ENCODE measurements at regions of chr9 and their contacts with region 1.

Region 1: DNA sequence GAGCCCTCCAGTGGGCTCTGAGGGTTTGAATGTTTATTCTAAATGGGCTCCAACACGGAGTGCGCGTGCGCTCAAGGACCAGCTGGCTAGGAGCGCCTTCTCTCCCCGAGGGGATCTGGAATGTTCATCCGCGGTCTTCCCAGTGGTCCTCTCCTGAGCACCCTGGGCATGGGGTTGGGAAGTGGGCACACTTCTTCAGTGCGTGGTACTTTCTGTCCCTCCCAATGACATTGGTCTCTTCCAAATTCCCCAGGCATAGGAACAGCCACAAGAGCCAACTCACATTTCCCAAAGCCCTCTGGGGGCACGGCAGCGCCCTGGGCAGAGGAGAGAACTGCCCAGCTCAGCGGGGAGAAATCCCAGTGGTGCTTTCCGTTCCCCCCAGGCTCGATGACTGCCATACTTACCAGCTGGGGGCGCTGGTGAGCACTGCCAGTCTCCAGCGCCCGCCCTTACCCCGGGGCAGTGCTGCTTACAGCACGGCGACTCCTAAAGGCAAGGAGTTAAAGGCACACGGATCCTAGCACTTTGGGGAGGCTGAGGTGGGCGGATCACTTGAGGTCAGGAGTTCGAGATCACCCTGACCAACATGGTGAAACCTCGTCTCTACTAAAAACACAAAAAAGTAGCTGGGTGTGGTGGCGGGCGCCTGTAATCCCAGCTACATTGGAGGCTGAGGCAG is 29.9 kb upstream of the OBP2B start:
- DNase-seq: peak; percentile 53 to 62 (median 56)
- H3K4me3 ChIP-seq: no peak overlapping the region
- H3K4me3 Mint-ChIP-seq: peak overlapping the region in 6 of 8 donors; percentile 17 to 65 (median 46)
- H3K27ac ChIP-seq: peak overlapping the region; percentile 2
- H3K27ac Mint-ChIP-seq: no peak overlapping the region
- H3K4me1 ChIP-seq: peaks cover 13% of the 10 kb centered on the region
- H3K4me1 Mint-ChIP-seq: peaks cover 0 to 17% (median 11%) of the 10 kb centered on the region in 4 donors
- H3K27me3 ChIP-seq: no peaks in the 10 kb centered on the region
- H3K27me3 Mint-ChIP-seq: peaks cover 11 to 12% of the 10 kb centered on the region in 2 donors

Region 2: DNA sequence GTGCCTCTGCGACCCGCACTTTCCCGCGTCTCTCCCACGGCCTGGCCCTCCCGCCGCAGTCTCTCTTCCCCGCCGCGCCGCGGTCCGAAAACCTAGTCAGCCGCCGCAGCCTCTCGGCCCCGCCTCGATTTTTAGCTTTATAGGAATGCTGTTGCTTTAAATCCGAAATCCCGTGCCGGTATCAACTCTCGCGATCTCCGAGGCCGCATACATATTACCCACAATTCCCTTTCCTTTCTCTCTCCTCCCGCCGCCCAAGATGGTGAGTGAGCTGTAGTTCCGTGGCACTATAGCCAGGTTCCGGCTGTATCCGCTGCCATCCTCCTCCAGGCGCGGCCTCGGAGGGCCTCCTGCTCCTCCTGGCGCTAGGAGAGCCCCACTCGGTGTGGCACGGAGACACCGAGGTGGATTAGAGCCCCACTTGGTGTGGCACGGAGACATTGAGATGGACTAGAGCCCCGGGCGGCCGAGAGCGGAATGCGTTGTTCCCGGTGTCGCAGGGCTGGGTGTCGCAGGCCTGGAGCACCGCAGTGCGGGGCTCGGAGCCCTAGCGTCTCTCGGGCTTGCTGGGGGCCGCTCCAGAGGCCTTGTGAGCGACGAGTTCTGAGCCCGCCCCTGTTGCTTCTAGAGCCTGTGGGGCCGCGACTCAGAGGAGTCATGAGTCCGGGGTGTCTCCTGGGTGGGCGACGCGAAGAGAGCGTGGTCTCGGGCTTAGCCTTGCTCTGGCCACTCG is 109.2 kb after region 1 on chr9 and contains the starts of genes MED22 and RPL7A:
- CTCF ChIA-PET with region 1: no interaction called
- POLR2A ChIA-PET with region 1: no interaction called
- intact Hi-C with region 1: no loop called
- DNase-seq: peak; percentile 92 to 94 (median 92)
- H3K4me3 ChIP-seq: peak within 1 kb of the TSS; percentile 80 to 99
- H3K4me3 Mint-ChIP-seq: peak within 1 kb of the TSS; percentile 97 to 100 (median 98)
- H3K27ac ChIP-seq: peak within 1 kb of the TSS; percentile 88
- H3K27ac Mint-ChIP-seq: peak within 1 kb of the TSS; percentile 93 to 99 (median 96)
- H3K4me1 ChIP-seq: peaks cover 33% of the 10 kb centered on the region
- H3K4me1 Mint-ChIP-seq: peaks cover 21 to 47% (median 33%) of the 10 kb centered on the region in 4 donors
- H3K27me3 ChIP-seq: no peaks in the 10 kb centered on the region
- H3K27me3 Mint-ChIP-seq: no peaks in the 10 kb centered on the region
- total RNA-seq, gene MED22: 40.2 to 42.8 TPM
- total RNA-seq, gene RPL7A: 2,104 to 2,268 TPM

Region 3: DNA sequence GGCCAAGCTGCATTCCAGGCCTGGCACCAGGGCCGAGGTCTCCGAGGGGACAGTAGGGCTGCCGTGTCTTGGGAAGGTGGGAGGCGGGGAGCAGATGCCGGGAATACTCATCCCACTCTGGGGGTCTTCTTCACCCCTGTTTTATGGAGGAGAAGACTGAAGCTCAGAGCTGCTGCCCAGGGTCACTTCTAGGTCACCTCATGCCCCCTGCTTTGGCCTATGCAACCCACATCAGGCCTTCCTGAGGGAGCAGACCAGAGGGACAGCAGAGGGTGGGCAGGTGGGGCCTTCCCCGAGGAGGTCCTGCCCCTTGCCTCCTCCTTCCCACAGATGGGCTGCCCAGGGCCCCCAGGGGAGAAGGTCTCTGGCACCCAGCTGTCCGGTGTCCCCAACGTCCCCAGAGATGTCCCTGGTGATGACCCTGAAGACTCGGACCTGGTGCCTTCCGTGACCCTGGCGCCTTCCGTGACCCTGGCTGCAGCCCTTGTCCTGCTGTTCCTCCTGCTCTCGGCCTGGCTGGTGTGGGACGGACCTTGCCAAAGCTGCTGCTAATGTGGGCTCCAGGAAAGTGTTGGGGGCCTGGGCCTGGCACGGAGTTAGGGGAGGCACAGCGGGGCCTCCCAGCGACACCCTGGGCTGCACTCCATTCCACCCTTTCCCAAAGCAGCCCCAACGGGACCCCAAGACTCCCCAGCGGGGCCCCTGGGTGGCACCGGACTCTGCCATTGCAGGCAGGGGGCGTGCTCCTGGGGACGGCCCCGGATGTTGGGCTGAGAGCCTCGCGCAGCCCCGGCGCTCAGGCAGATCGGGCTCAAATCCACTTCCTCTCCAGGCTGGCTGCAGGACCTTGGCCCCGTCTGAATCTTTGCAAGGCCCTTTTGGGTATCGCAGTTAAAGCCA is 246.6 kb after region 1 on chr9:
- CTCF ChIA-PET with region 1: no interaction called
- POLR2A ChIA-PET with region 1: no interaction called
- intact Hi-C with region 1: loop called (anchors 1 kb)
- DNase-seq: no peak
- H3K4me3 ChIP-seq: peak overlapping the region in 1 of 2 donors; percentile 6
- H3K4me3 Mint-ChIP-seq: no peak overlapping the region
- H3K27ac ChIP-seq: no peak overlapping the region
- H3K27ac Mint-ChIP-seq: no peak overlapping the region
- H3K4me1 ChIP-seq: peaks cover 5% of the 10 kb centered on the region
- H3K4me1 Mint-ChIP-seq: peaks cover 0 to 4% (median 0%) of the 10 kb centered on the region in 4 donors
- H3K27me3 ChIP-seq: no peaks in the 10 kb centered on the region
- H3K27me3 Mint-ChIP-seq: peaks cover 7 to 14% of the 10 kb centered on the region in 2 donors